Activated CD8-positive, alpha-beta T cell treated with anti-CD3 and anti-CD28 coated beads, Interleukin-2, amount 10 ng/mL, durations not matched to agents 7 days and 5 days (primary cell): ENCODE measurements at regions of chr2 and their contacts with region 1.

Region 1: GRCh38 chr2:101205521-101205998 is 47.1 kb upstream of the CNOT11 start:
- DNase-seq: peak; percentile 71
- ATAC-seq: peak; percentile 91
- H3K4me3 Mint-ChIP-seq: peak overlapping the region; percentile 58
- H3K27ac Mint-ChIP-seq: peak overlapping the region; percentile 81
- H3K4me1 Mint-ChIP-seq: peaks cover 16% of the 10 kb centered on the region
- H3K27me3 Mint-ChIP-seq: peaks cover 4% of the 10 kb centered on the region

Region 2: DNA sequence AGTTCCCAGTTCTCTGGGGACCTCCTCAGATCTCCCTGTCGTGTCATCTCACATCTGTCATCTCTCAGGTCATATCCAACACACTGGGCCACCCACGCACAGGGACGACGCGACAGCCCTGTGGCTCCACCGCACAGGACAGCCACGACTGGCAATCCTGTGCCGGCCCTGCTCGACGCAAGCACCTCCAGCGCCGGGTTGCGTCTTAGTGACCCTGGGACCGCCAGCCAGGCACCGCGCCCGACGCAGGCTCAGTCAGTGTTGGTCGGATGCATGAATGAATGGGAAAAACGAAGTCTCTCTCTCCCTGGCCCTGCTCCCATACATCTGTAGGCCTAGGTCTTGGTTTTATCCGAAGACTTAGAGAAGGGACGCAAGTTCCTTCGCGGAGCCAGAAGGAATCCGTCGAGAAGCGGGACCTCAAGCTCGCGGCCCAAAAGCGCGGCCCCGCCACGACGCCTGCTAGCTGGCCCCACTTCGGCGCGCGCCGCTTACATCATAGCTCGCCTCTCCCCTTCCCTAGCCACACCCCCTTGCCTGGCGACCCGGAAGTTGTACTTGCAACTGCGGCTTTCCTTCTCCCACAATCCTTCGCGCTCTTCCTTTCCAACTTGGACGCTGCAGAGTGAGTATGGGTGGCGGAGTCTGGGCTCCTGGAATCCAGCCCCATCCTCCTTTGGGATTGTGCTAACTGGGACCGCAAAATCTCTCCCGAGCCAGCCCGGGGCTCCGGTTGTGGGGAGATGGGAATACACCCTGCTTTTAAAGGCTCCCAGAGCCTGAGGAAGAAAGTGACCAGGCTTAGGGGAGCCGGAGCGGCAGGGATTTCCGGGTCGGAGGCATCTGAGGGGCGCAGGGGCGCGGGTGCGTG is 203.6 kb before region 1 on chr2 and contains the start of gene RPL31:
- CTCF ChIA-PET with region 1: interaction called, 21 read pairs
- POLR2A ChIA-PET with region 1: interaction called, 3 read pairs
- DNase-seq: peak; percentile 98
- ATAC-seq: peak; percentile 95
- H3K4me3 Mint-ChIP-seq: peak within 1 kb of the TSS; percentile 94
- H3K27ac Mint-ChIP-seq: peak within 1 kb of the TSS; percentile 96
- H3K4me1 Mint-ChIP-seq: peaks cover 44% of the 10 kb centered on the region
- H3K27me3 Mint-ChIP-seq: peaks cover 3% of the 10 kb centered on the region
- total RNA-seq, gene RPL31: 1,300 to 1,339 TPM

Region 3: DNA sequence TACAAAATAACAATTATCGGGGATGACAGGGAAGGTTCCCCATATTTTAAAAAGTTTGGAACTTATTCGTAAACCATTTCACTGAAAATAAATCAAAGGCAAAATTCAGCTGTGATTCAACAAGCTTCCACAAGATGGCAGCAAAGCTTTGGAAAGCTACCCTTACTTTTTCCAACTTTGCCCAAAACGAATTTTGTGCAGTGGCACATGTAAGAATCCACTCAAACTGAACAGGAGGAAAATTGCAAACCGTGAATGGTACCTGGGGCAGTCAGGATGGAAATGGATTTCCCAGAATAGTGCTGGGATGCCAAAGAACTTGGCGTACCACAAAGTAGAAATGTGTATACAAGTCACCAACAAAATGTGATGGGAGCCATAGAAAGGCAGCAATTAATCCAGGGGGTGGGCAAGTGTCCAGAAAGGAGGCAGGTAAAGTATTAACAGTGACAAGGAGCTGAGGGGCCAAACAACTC is 192.8 kb before region 1 on chr2:
- CTCF ChIA-PET with region 1: interaction called, 58 read pairs
- POLR2A ChIA-PET with region 1: interaction called, 3 read pairs
- DNase-seq: peak; percentile 54
- ATAC-seq: no peak
- H3K4me3 Mint-ChIP-seq: no peak overlapping the region
- H3K27ac Mint-ChIP-seq: no peak overlapping the region
- H3K4me1 Mint-ChIP-seq: peaks cover 18% of the 10 kb centered on the region
- H3K27me3 Mint-ChIP-seq: no peaks in the 10 kb centered on the region

Region 4: GRCh38 chr2:101036562-101037457 is 168.8 kb before region 1 on chr2:
- CTCF ChIA-PET with region 1: interaction called, 45 read pairs
- POLR2A ChIA-PET with region 1: no interaction called
- DNase-seq: no peak
- ATAC-seq: no peak
- H3K4me3 Mint-ChIP-seq: no peak overlapping the region
- H3K27ac Mint-ChIP-seq: no peak overlapping the region
- H3K4me1 Mint-ChIP-seq: peaks cover 5% of the 10 kb centered on the region
- H3K27me3 Mint-ChIP-seq: no peaks in the 10 kb centered on the region

Region 5: GRCh38 chr2:101223814-101224231 is 18.3 kb after region 1 on chr2:
- CTCF ChIA-PET with region 1: interaction called, 30 read pairs
- POLR2A ChIA-PET with region 1: no interaction called
- DNase-seq: peak; percentile 83
- ATAC-seq: peak; percentile 95
- H3K4me3 Mint-ChIP-seq: peak overlapping the region; percentile 34
- H3K27ac Mint-ChIP-seq: peak overlapping the region; percentile 86
- H3K4me1 Mint-ChIP-seq: peaks cover 28% of the 10 kb centered on the region
- H3K27me3 Mint-ChIP-seq: no peaks in the 10 kb centered on the region